IMR-90 (cell line): ENCODE measurements at regions of chr1 and their contacts with region 1.

Region 1: GRCh38 chr1:150149271-150150132 is at the start of gene PLEKHO1:
- DNase-seq: peak; percentile 85
- ATAC-seq: peak; percentile 84
- H3K4me3 ChIP-seq: peak within 1 kb of the TSS; percentile 97
- H3K27ac ChIP-seq: peak within 1 kb of the TSS; percentile 98
- H3K4me1 ChIP-seq: peaks cover 16% of the 10 kb centered on the region
- H3K27me3 ChIP-seq: no peaks in the 10 kb centered on the region
- CTCF ChIP-seq: no peak
- POLR2A ChIP-seq: peak; percentile 72
- RAD21 ChIP-seq: no peak
- total RNA-seq, gene PLEKHO1: 51.4 and 53.3 TPM in 2 replicates

Region 2: GRCh38 chr1:150093805-150094204 is 55.7 kb before region 1 on chr1:
- CTCF ChIA-PET with region 1: no interaction called
- POLR2A ChIA-PET with region 1: no interaction called
- dilution Hi-C with region 1: no loop called
- in situ Hi-C with region 1: no loop called
- intact Hi-C with region 1: no loop called
- DNase-seq: no peak
- ATAC-seq: no peak
- H3K4me3 ChIP-seq: no peak overlapping the region
- H3K27ac ChIP-seq: no peak overlapping the region
- H3K4me1 ChIP-seq: no peaks in the 10 kb centered on the region
- H3K27me3 ChIP-seq: no peaks in the 10 kb centered on the region
- CTCF ChIP-seq: no peak
- POLR2A ChIP-seq: no peak
- RAD21 ChIP-seq: no peak

Region 3: GRCh38 chr1:150106341-150106740 is 43.2 kb before region 1 on chr1:
- CTCF ChIA-PET with region 1: interaction called, 3 read pairs
- POLR2A ChIA-PET with region 1: no interaction called
- dilution Hi-C with region 1: no loop called
- in situ Hi-C with region 1: no loop called
- intact Hi-C with region 1: loop called (anchors 5 kb)
- DNase-seq: peak; percentile 29
- ATAC-seq: no peak
- H3K4me3 ChIP-seq: no peak overlapping the region
- H3K27ac ChIP-seq: no peak overlapping the region
- H3K4me1 ChIP-seq: no peaks in the 10 kb centered on the region
- H3K27me3 ChIP-seq: no peaks in the 10 kb centered on the region
- CTCF ChIP-seq: no peak
- POLR2A ChIP-seq: no peak
- RAD21 ChIP-seq: no peak

Region 4: GRCh38 chr1:150134537-150134936 is 15.0 kb before region 1 on chr1:
- CTCF ChIA-PET with region 1: interaction called, 4 read pairs
- POLR2A ChIA-PET with region 1: no interaction called
- dilution Hi-C with region 1: no loop called
- in situ Hi-C with region 1: no loop called
- intact Hi-C with region 1: loop called (anchors 1 kb)
- DNase-seq: no peak
- ATAC-seq: no peak
- H3K4me3 ChIP-seq: no peak overlapping the region
- H3K27ac ChIP-seq: no peak overlapping the region
- H3K4me1 ChIP-seq: peaks cover 6% of the 10 kb centered on the region
- H3K27me3 ChIP-seq: no peaks in the 10 kb centered on the region
- CTCF ChIP-seq: no peak
- POLR2A ChIP-seq: no peak
- RAD21 ChIP-seq: no peak